Caco-2 (cell line): ENCODE measurements at regions of chr10 and their contacts with region 1.

Region 1: GRCh38 chr10:90701428-90701827 is 156.4 kb downstream of the HTR7 start:
- DNase-seq: no peak
- H3K4me3 ChIP-seq: no peak overlapping the region
- H3K4me3 Mint-ChIP-seq: no peak overlapping the region
- H3K27ac Mint-ChIP-seq: no peak overlapping the region
- H3K4me1 ChIP-seq: no peaks in the 10 kb centered on the region
- H3K4me1 Mint-ChIP-seq: no peaks in the 10 kb centered on the region
- H3K27me3 ChIP-seq: no peaks in the 10 kb centered on the region
- H3K27me3 Mint-ChIP-seq: peaks cover 4% of the 10 kb centered on the region
- CTCF ChIP-seq: no peak

Region 2: GRCh38 chr10:90087197-90088007 is 614.0 kb before region 1 on chr10:
- CTCF ChIA-PET with region 1: no interaction called
- POLR2A ChIA-PET with region 1: interaction called, 10 read pairs
- intact Hi-C with region 1: no loop called
- DNase-seq: no peak
- H3K4me3 ChIP-seq: no peak overlapping the region
- H3K4me3 Mint-ChIP-seq: no peak overlapping the region
- H3K27ac Mint-ChIP-seq: no peak overlapping the region
- H3K4me1 ChIP-seq: no peaks in the 10 kb centered on the region
- H3K4me1 Mint-ChIP-seq: no peaks in the 10 kb centered on the region
- H3K27me3 ChIP-seq: no peaks in the 10 kb centered on the region
- H3K27me3 Mint-ChIP-seq: peaks cover 9% of the 10 kb centered on the region
- CTCF ChIP-seq: no peak

Region 3: DNA sequence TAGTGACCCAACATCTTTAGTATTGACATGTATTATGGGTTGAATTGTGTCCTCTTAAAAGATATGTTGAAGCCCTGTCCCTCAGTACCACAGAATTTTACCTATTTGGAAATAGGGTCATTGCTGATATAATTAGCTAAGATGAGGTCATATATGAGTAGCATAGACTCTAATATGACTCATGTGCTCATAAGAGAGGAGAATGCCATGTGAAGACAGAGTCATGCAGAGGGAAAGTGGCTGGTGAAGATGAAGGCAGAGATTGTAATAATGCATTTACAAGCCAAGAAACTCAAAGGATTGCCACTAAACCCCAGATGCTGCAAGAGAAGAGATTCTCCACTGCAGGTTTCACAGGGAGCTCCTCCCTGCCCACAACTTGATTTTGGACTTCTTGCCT is 503.7 kb before region 1 on chr10:
- CTCF ChIA-PET with region 1: no interaction called
- POLR2A ChIA-PET with region 1: no interaction called
- intact Hi-C with region 1: no loop called
- DNase-seq: no peak
- H3K4me3 ChIP-seq: no peak overlapping the region
- H3K4me3 Mint-ChIP-seq: no peak overlapping the region
- H3K27ac Mint-ChIP-seq: no peak overlapping the region
- H3K4me1 ChIP-seq: no peaks in the 10 kb centered on the region
- H3K4me1 Mint-ChIP-seq: no peaks in the 10 kb centered on the region
- H3K27me3 ChIP-seq: no peaks in the 10 kb centered on the region
- H3K27me3 Mint-ChIP-seq: peaks cover 6% of the 10 kb centered on the region
- CTCF ChIP-seq: no peak

Region 4: GRCh38 chr10:90378524-90379076 is 322.8 kb before region 1 on chr10:
- CTCF ChIA-PET with region 1: no interaction called
- POLR2A ChIA-PET with region 1: no interaction called
- intact Hi-C with region 1: no loop called
- DNase-seq: no peak
- H3K4me3 ChIP-seq: no peak overlapping the region
- H3K4me3 Mint-ChIP-seq: no peak overlapping the region
- H3K27ac Mint-ChIP-seq: no peak overlapping the region
- H3K4me1 ChIP-seq: no peaks in the 10 kb centered on the region
- H3K4me1 Mint-ChIP-seq: no peaks in the 10 kb centered on the region
- H3K27me3 ChIP-seq: no peaks in the 10 kb centered on the region
- H3K27me3 Mint-ChIP-seq: peaks cover 10% of the 10 kb centered on the region
- CTCF ChIP-seq: no peak